H1 (cell line): ENCODE measurements at regions of chr7 and their contacts with region 1.

Region 1: DNA sequence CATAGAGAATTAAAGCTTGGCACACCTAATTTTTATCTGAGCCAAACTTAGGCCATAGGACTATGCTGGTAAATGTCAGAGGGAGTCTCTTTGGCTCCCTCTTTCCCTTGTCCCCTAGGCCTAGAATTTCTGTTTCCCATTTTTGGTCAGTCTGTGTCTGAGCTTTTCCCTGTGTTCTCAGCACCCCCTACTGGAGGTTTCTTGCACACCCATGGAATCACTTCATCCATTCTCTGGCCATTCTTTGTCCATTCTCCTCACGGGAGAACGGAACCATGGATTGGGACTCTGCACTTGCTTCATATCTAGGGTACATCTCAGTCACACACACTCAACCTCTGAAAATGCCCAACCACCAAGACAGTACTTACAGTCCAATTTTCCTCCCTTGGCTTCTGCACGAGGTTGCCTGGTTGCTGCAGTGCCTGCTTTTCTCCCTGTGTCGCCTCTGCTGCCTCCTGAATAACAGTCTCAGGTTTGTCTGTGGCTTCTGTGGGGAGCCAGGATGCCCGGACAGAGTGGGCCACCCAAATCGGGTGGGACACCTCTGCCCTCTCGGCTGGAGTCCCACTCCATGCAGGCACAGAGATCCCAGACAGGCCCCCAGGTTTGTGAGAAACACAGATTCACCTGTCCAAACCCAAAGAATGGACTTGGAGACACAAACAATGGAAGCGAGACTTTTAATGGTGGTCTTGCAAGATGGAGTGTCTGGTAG is 35.1 kb upstream of the DNAH11 start:
- DNase-seq: peak; percentile 10 to 78
- H3K4me3 ChIP-seq: no peak overlapping the region
- H3K27ac ChIP-seq: no peak overlapping the region
- H3K4me1 ChIP-seq: peaks cover 0 to 3% (median 0%) of the 10 kb centered on the region in 4 experiments; a peak in 1 of 7 replicates
- H3K27me3 ChIP-seq: no peaks in the 10 kb centered on the region
- CTCF ChIP-seq: peak; percentile 38 to 84 (median 77)
- EP300 ChIP-seq: no peak
- POLR2A ChIP-seq: no peak
- RAD21 ChIP-seq: peak; percentile 91 to 92

Region 2: DNA sequence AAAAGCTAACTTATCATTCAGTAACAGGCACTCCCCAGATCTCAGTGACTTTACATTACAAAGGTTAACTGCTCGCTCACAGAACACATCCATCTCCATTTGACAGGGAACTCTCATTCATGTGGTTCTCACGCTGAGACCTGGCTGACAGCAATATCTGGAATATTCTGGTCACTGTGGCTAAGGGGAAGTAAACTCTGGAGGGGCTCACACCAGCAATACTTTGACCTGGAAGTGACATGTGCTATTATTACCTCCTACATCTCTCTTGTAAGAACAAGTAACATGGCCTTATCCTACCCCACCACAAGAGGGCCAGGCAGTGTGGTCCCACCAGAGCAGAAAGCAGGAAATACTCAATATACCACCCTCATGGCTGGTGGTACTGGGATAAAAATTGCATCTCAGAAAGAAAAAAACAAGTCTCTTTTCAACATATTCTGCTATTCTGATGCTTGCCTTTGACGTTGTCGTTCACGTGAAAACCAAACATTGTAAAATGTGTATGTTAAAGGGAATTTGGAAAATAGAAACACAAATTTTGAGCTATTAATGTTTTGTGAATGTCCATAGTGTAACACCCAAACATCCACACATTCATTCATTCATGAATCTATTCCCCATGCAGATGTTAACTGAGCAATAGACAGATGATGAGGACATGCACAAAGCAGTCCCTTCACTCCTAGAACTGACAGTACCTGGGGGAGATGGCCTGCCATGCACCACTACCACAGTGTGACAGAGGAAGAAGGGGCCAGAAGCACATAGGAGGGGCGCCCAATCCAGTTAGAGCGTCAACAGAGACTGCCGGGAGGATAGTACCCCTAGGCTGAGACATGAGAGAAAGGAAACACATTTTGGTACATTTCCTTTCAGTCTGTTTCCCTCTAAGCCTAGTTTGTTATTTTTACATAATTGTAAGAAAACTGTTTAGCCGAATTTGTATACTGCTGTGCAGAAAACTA is 245.9 kb before region 1 on chr7:
- CTCF ChIA-PET with region 1: interaction called, 10 read pairs
- POLR2A ChIA-PET with region 1: no interaction called
- DNase-seq: peak; percentile 36 to 62
- H3K4me3 ChIP-seq: peak overlapping the region in 1 of 4 experiments; percentile 12; a peak in 2 of 8 replicates
- H3K27ac ChIP-seq: no peak overlapping the region
- H3K4me1 ChIP-seq: peaks cover 0 to 12% (median 5%) of the 10 kb centered on the region in 4 experiments; a peak in 5 of 7 replicates
- H3K27me3 ChIP-seq: peaks cover 0 to 2% (median 0%) of the 10 kb centered on the region in 4 experiments; a peak in 2 of 7 replicates
- CTCF ChIP-seq: peak; percentile 26 to 62 (median 51)
- EP300 ChIP-seq: no peak; a peak in 1 of 3 replicates
- POLR2A ChIP-seq: no peak
- RAD21 ChIP-seq: peak; percentile 55 to 65

Region 3: GRCh38 chr7:21407796-21408480 is 99.8 kb before region 1 on chr7:
- CTCF ChIA-PET with region 1: no interaction called
- POLR2A ChIA-PET with region 1: no interaction called
- DNase-seq: no peak
- H3K4me3 ChIP-seq: no peak overlapping the region
- H3K27ac ChIP-seq: no peak overlapping the region
- H3K4me1 ChIP-seq: no peaks in the 10 kb centered on the region; a peak in 1 of 7 replicates
- H3K27me3 ChIP-seq: no peaks in the 10 kb centered on the region
- CTCF ChIP-seq: no peak
- EP300 ChIP-seq: no peak
- POLR2A ChIP-seq: no peak
- RAD21 ChIP-seq: no peak